ENCODE measurements at regions of chr2 and their contacts with region 1.

Region 1: GRCh38 chr2:30706534-30707304 is 100.5 kb downstream of the CAPN13 start:
- DNase-seq: peak; percentile 66 to 84
- H3K4me3 ChIP-seq: no peak overlapping the region
- H3K27ac ChIP-seq: peak overlapping the region; percentile 42 to 49
- H3K4me1 ChIP-seq: peaks cover 0 to 55% (median 24%) of the 10 kb centered on the region in 4 donors
- H3K27me3 ChIP-seq: no peaks in the 10 kb centered on the region
- CTCF ChIP-seq: peak; percentile 86 to 91

Region 2: DNA sequence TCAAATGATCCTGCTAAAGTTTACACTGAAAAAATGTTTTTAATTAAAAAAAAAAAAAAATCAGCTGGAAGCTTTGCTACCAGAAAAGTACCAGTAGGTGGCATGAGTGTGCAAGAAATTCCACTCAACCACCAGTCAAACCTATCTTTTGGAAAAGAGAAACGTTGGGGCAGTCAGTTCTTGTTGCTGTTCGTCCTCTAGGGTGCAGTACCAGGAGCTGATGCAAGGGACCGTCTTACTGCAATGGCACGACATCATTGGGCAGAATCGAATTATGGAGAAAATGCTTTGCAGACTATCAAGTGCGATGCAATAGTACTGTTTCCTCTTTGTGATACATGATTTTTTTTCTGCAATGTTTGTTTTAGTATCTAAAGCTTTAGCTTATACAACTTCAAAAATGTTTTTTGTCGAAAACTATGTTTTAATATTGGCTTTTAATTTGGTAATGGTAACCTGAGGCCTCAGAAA is 541.6 kb before region 1 on chr2:
- intact Hi-C with region 1: loop called (anchors 5 kb)
- DNase-seq: peak in 1 of 2 donors; percentile 39
- H3K4me3 ChIP-seq: no peak overlapping the region
- H3K27ac ChIP-seq: no peak overlapping the region
- H3K4me1 ChIP-seq: peaks cover 0 to 2% (median 0%) of the 10 kb centered on the region in 4 donors
- H3K27me3 ChIP-seq: no peaks in the 10 kb centered on the region
- CTCF ChIP-seq: peak; percentile 76 to 84

Region 3: DNA sequence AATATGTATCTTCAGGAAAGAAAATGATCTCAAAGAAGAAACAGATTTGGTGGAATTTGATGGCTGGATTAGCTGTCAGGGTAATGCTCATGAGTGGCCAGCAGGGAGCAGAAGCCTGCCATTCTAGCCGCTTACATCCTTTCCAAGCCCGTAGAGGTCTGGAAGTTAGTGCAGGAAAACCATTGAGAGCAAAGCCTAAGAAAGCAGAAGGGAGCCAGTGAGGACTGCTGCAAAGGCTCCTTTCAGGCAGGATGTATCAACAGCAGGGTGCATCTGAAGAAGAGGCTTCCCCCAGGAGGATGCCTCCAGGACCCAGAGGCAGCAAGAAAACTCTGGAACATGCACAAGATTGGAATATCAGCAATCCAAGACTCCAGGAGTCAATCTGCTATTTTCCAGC is 498.3 kb before region 1 on chr2:
- intact Hi-C with region 1: loop called (anchors 2 kb)
- DNase-seq: peak; percentile 45 to 75
- H3K4me3 ChIP-seq: no peak overlapping the region
- H3K27ac ChIP-seq: no peak overlapping the region
- H3K4me1 ChIP-seq: peaks cover 0 to 16% (median 10%) of the 10 kb centered on the region in 4 donors
- H3K27me3 ChIP-seq: no peaks in the 10 kb centered on the region
- CTCF ChIP-seq: peak; percentile 91 to 94

Region 4: DNA sequence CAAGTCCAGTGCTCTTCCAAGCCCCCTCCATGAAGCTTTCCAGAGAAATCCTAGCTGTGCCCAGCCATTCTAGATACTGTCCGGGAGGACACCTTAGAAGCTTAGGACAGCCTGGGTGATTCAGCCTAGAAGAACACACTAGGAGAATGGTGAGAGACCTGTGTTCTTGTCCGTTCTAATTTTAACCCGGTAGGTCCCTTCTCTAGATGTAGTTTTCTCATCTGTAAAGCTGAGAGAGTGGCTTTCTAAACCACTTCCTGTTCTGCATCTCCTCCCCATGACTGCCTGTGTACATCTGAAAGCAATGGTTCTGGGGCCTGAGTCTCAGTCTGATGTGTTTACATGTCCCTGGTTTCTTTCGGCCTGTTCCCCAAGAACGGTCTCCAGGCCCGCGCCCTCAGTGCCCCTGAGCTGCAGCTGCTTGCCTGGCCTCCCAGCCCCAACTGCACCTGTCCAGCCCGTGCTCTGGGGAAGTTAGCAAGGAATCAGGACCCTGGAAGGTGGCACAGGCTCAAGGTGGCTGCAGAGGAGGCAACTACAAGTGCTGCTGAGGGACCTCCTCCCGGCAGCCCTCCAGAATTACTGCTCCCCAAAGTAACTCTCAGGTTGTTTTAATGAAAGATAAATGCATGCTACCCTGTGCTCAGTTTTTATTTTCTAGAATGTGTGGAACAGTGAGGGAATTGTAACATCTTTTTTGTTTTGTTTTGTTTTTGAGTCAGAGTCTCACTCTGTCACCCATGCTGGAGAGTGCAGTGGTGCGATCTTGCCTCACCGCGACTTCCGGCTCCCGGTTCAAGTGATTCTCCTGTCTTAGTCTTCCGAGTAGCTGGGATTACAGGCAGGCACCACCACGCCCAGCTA is 369.5 kb before region 1 on chr2:
- intact Hi-C with region 1: loop called (anchors 10 kb)
- DNase-seq: no peak
- H3K4me3 ChIP-seq: no peak overlapping the region
- H3K27ac ChIP-seq: no peak overlapping the region
- H3K4me1 ChIP-seq: peaks cover 0 to 5% (median 0%) of the 10 kb centered on the region in 4 donors
- H3K27me3 ChIP-seq: no peaks in the 10 kb centered on the region
- CTCF ChIP-seq: no peak

Region 5: GRCh38 chr2:30472326-30472725 is 234.4 kb before region 1 on chr2:
- intact Hi-C with region 1: loop called (anchors 10 kb)
- DNase-seq: no peak
- H3K4me3 ChIP-seq: no peak overlapping the region
- H3K27ac ChIP-seq: peak overlapping the region; percentile 32 to 33
- H3K4me1 ChIP-seq: peaks cover 0 to 38% (median 0%) of the 10 kb centered on the region in 4 donors
- H3K27me3 ChIP-seq: no peaks in the 10 kb centered on the region
- CTCF ChIP-seq: no peak